ENCODE measurements at regions of chr20 and their contacts with region 1.

Region 1: DNA sequence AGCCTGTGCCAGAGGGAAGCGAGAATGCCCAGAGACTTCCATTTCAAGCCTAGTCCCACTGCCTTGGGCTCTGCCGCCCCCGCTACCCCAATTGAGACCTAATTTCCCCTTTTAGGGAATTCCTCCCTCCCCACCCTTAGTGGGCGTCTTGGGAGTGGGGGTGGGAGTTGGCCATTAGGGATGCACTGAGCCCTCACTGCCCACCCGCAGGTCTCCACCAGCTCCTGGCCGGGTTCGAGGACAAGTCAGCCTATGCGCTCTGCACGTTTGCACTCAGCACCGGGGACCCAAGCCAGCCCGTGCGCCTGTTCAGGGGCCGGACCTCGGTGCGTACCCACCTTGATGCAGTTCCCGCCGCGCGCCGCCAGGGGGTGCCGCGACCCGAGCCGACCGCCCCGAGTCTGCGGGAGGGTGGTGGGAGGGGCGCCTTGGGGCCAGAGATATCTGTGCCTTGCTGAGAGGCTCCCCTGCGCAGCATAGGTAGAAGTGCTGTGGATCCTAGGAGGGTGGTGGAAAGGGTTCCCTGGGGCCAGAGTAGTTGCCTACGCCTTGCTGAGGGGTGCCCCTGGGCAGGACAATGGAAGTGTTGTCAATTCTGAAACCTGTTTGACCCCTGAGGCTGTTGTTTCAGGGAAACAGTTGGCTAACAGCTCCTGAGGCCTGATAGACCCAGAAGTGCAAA is 9.2 kb downstream of the ITPA start:
- DNase-seq: peak; percentile 93
- H3K4me3 Mint-ChIP-seq: no peak overlapping the region
- H3K27ac Mint-ChIP-seq: no peak overlapping the region
- H3K4me1 Mint-ChIP-seq: peaks cover 5% of the 10 kb centered on the region
- H3K27me3 Mint-ChIP-seq: no peaks in the 10 kb centered on the region

Region 2: DNA sequence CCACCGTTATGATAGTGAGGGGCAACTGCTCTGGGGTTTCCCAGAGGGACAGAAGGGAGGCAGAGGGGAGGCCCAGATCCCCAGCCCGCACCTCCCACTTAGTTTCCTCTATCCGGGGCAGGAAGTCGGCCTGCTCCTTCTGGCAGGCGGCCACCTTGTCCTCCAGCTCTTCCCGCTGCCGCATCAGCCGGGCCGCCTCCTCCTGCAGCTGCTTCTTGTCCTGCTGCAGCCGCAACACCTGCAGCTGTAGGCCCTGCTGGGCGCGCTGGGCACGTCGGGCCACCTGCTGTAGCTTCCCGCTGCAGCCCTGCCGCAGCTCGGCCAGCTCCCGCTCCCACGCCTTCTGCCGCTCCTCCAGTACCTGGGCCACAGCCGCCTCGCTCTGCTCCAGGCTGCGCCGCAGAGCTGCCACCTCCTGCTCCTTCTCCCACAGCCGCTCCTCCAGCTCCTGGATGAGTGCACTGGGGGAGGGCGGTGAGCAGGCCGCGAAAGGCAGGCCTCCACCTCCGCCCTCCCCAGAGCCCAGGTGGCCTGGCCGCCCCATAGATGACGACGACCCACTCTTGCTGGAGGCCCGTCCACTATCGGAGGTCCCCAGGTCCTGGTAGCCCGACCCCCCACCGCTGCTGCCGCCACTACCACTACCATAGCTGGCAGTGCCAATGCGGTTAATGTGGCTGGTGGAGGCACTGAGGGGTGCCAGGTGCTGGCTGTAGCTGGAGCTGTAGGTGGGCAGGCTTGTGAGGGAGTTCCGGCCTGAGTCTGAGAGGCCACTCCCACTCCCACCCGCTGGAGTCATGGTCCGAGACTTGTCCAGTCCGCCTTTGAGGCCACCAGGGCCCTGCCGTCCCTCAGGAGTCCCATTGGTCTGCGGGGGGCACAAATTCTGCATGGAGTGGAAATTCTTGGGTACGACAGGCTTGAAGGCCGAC is 52.8 kb before region 1 on chr20:
- intact Hi-C with region 1: no loop called
- DNase-seq: no peak
- H3K4me3 Mint-ChIP-seq: no peak overlapping the region
- H3K27ac Mint-ChIP-seq: no peak overlapping the region
- H3K4me1 Mint-ChIP-seq: no peaks in the 10 kb centered on the region
- H3K27me3 Mint-ChIP-seq: peaks cover 22% of the 10 kb centered on the region

Region 3: DNA sequence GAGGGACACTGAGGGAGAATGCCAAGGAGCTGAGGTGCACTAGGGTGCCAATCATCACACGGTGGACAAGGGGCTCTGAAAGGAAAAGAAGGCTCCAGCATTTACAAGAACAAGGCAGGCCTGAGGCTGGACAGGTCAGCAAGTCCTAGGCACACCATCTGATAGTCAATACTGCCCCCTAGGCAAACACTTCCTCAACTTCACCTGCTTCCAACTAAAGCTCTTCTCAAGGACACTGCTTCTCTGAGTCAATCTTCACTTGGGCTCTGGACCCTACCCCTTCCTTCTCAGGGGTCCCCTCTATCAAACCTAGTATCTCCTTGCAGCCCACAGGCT is 58.2 kb after region 1 on chr20:
- intact Hi-C with region 1: loop called (anchors 2 kb)
- DNase-seq: no peak
- H3K4me3 Mint-ChIP-seq: no peak overlapping the region
- H3K27ac Mint-ChIP-seq: no peak overlapping the region
- H3K4me1 Mint-ChIP-seq: no peaks in the 10 kb centered on the region
- H3K27me3 Mint-ChIP-seq: no peaks in the 10 kb centered on the region

Measured in activated CD4-positive, alpha-beta T cell treated with anti-CD3 and anti-CD28 coated beads, Interleukin-2, amount 10 ng/mL, durations not matched to agents 24 days and 14 days (primary cell).